MCF 10A (cell line): ENCODE measurements at regions of chr1 and their contacts with region 1.

Region 1: DNA sequence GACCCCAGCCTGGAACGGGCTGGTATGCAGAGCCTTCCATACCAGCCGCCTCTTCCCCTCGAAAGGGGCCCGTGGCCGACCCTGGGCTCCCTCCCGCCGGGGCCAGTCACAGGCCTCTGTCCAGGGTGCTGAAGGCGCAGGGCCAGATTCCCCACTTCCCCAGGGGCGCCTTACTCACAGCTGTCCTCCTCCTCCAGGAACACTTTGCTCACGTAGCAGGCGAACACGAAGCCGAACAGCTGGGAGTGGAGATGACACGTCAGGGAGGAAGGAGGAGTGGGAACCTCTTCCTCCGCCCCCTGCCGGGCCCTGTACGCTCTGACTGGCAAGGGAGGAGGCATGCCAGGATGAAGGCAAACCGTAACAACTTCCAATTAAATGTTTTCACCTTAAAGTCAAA is 57.3 kb downstream of the NKAIN1 start:
- DNase-seq: peak; percentile 96
- H3K4me3 Mint-ChIP-seq: peak overlapping the region; percentile 40
- H3K27ac Mint-ChIP-seq: no peak overlapping the region
- H3K4me1 Mint-ChIP-seq: peaks cover 4% of the 10 kb centered on the region
- H3K27me3 Mint-ChIP-seq: peaks cover 35% of the 10 kb centered on the region
- CTCF ChIP-seq: peak; percentile 44

Region 2: GRCh38 chr1:30779294-30780071 is 402.9 kb before region 1 on chr1:
- CTCF ChIA-PET with region 1: no interaction called
- POLR2A ChIA-PET with region 1: no interaction called
- intact Hi-C with region 1: loop called (anchors 10 kb)
- DNase-seq: peak; percentile 80
- H3K4me3 Mint-ChIP-seq: no peak overlapping the region
- H3K27ac Mint-ChIP-seq: peak overlapping the region; percentile 14
- H3K4me1 Mint-ChIP-seq: peaks cover 30% of the 10 kb centered on the region
- H3K27me3 Mint-ChIP-seq: no peaks in the 10 kb centered on the region
- CTCF ChIP-seq: peak; percentile 94

Region 3: DNA sequence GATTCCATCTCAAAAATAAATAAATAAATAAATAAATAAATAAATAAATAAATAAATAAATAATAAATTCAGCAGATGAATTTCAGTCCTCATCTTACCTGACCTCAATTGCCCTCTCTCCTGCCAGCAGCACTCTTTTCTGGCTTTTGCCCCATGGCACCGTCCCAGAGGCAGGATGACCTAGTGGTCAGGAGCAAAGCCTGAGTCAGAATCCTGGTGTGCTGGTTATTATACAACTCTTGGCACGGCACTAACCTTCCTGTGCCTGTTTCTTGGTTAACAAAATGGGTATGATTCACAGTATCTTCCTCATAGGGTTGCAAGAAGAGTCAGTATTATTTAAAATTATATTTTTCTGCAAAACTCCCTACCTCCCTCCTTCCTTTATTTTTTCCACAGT is 14.3 kb after region 1 on chr1:
- CTCF ChIA-PET with region 1: interaction called, 25 read pairs
- POLR2A ChIA-PET with region 1: no interaction called
- intact Hi-C with region 1: no loop called
- DNase-seq: peak; percentile 90
- H3K4me3 Mint-ChIP-seq: no peak overlapping the region
- H3K27ac Mint-ChIP-seq: no peak overlapping the region
- H3K4me1 Mint-ChIP-seq: no peaks in the 10 kb centered on the region
- H3K27me3 Mint-ChIP-seq: no peaks in the 10 kb centered on the region
- CTCF ChIP-seq: no peak

Region 4: GRCh38 chr1:31272369-31272768 is 90.0 kb after region 1 on chr1:
- CTCF ChIA-PET with region 1: interaction called, 34 read pairs
- POLR2A ChIA-PET with region 1: no interaction called
- intact Hi-C with region 1: no loop called
- DNase-seq: no peak
- H3K4me3 Mint-ChIP-seq: no peak overlapping the region
- H3K27ac Mint-ChIP-seq: no peak overlapping the region
- H3K4me1 Mint-ChIP-seq: peaks cover 7% of the 10 kb centered on the region
- H3K27me3 Mint-ChIP-seq: no peaks in the 10 kb centered on the region
- CTCF ChIP-seq: no peak

Region 5: DNA sequence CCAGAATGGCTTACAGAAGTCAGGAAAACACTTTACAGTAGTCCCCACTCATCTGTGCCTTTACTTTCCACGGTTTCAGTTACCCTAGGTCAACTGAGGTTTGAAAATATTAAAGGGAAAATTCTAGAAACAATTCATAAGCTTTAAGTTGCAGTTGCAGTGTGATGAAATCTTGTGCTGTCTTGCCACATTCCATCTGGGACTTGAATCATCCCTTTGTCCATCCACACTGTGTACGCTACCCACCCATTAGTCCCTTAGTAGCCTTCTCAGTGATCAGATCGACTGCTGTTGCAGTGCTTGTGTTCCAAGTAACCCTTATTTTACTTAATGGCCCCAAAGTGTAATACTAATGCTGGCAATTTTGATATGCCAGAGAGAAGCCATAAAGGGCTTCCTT is 145.0 kb after region 1 on chr1:
- CTCF ChIA-PET with region 1: interaction called, 28 read pairs
- POLR2A ChIA-PET with region 1: interaction called, 3 read pairs
- intact Hi-C with region 1: no loop called
- DNase-seq: peak; percentile 49
- H3K4me3 Mint-ChIP-seq: no peak overlapping the region
- H3K27ac Mint-ChIP-seq: peak overlapping the region; percentile 57
- H3K4me1 Mint-ChIP-seq: peaks cover 12% of the 10 kb centered on the region
- H3K27me3 Mint-ChIP-seq: no peaks in the 10 kb centered on the region
- CTCF ChIP-seq: no peak

Region 6: DNA sequence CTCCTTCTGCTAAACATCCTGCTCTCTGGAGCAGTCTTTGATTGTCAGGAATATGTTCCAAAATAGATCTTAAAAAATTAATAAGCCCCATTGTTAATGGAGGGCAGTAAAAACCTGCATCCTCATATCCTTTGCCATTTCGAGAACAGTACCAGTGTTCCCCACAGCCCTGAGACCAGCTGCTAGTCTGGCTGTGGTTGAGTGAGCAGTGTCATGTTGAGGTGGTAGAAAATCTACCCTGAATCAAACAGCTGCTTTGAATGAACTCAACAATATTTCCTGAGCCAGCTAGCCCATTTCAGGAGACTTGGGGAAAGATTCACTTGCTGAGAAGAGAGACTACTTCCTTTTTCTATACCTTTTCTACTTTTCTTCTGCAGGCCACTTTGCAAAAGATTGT is 166.1 kb after region 1 on chr1:
- CTCF ChIA-PET with region 1: interaction called, 12 read pairs
- POLR2A ChIA-PET with region 1: no interaction called
- intact Hi-C with region 1: no loop called
- DNase-seq: no peak
- H3K4me3 Mint-ChIP-seq: no peak overlapping the region
- H3K27ac Mint-ChIP-seq: no peak overlapping the region
- H3K4me1 Mint-ChIP-seq: no peaks in the 10 kb centered on the region
- H3K27me3 Mint-ChIP-seq: no peaks in the 10 kb centered on the region
- CTCF ChIP-seq: no peak

Region 7: GRCh38 chr1:31422505-31423319 is 240.4 kb after region 1 on chr1:
- CTCF ChIA-PET with region 1: interaction called, 32 read pairs
- POLR2A ChIA-PET with region 1: no interaction called
- intact Hi-C with region 1: loop called (anchors 1 kb)
- DNase-seq: peak; percentile 91
- H3K4me3 Mint-ChIP-seq: peak overlapping the region; percentile 30
- H3K27ac Mint-ChIP-seq: peak overlapping the region; percentile 94
- H3K4me1 Mint-ChIP-seq: peaks cover 29% of the 10 kb centered on the region
- H3K27me3 Mint-ChIP-seq: no peaks in the 10 kb centered on the region
- CTCF ChIP-seq: peak; percentile 95